Dorsolateral prefrontal cortex (tissue), 120 donors: ENCODE measurements at regions of chr11 and their contacts with region 1.

Region 1: DNA sequence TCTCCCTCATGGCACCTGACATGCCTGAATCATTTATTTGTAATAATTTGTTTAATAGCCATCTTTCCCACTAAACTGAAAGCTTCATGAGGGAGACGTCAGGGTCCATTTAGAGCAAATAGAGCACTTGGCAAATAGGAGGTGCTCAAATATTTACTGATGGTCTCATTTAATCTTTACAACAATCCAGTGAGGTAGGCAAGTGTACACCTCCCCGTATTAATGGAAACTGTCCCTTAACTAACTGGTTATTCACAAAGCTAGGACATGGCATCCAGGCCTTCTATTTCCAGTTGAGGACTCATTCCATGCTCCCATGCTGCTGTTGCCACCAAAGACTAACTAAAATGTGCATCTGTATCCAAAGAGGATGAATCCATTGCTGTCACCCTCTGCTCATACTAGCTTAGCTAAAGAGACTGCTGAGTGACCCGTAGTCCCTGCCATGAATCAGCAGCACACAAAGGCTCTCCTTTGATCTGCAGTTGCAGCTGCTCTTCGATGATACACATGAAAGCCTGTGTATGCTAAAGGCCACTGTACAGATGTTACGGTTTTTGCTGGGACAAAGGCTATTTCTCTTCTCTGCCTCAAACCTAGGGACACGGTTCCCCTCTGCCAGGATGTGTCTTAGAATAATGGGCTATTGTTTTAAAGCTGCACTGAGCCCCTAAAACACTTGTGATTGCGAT is 82.6 kb downstream of the RAB30 start:
- DNase-seq: peak in 8 of 10 donors; percentile 62 to 87 (median 80)
- H3K4me3 ChIP-seq: peak overlapping the region in 34 of 59 donors; percentile 1 to 49 (median 22)
- H3K27ac ChIP-seq: peak overlapping the region in 58 of 59 donors; percentile 32 to 98 (median 90)
- H3K27me3 ChIP-seq: no peaks in the 10 kb centered on the region
- CTCF ChIP-seq: peak in 3 of 56 donors; percentile 9 to 23 (median 14)

Region 2: GRCh38 chr11:82599836-82600235 is 389.2 kb before region 1 on chr11:
- intact Hi-C with region 1: no loop called
- DNase-seq: no peak
- H3K4me3 ChIP-seq: no peak overlapping the region
- H3K27ac ChIP-seq: no peak overlapping the region
- H3K27me3 ChIP-seq: no peaks in the 10 kb centered on the region
- CTCF ChIP-seq: no peak

Region 3: GRCh38 chr11:83007909-83008580 is 19.0 kb after region 1 on chr11:
- intact Hi-C with region 1: loop called in 1 of 2 experiments (anchors 2 kb)
- DNase-seq: peak in 4 of 10 donors; percentile 38 to 58 (median 54)
- H3K4me3 ChIP-seq: peak overlapping the region in 10 of 59 donors; percentile 1 to 23 (median 8)
- H3K27ac ChIP-seq: peak overlapping the region; percentile 38 to 98 (median 90)
- H3K27me3 ChIP-seq: no peaks in the 10 kb centered on the region
- CTCF ChIP-seq: peak in 12 of 56 donors; percentile 7 to 32 (median 20)

Region 4: DNA sequence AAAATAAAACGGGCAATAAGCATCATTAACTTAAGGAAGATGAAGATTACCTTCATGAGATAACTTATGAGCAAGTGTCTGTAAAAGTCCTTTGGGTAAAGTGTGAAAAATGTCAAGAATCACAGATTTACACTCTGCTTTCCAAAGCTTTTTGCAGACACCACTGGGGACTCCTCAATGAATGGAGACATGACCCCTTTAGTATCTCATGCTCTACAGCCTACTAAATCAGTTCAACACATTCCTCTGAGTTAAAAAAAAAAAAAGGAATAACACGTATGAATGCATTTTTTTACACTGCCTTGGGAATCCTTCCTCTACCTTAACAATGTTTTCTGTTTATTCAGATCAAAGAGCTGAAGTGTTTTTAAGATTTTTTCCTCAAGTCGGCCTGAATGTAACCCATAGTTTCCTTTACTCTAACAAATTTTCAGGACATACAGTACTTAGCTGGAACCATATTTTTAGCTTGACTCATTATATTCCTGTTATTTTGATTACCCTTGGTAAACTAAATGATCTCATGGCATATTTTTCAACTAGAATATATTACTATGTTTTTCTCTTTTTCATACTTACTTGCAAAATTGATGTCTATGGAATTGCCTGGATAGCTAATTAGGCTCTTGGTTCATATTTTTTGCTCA is 108.5 kb after region 1 on chr11:
- intact Hi-C with region 1: no loop called
- DNase-seq: no peak
- H3K4me3 ChIP-seq: no peak overlapping the region
- H3K27ac ChIP-seq: no peak overlapping the region
- H3K27me3 ChIP-seq: no peaks in the 10 kb centered on the region
- CTCF ChIP-seq: no peak

Region 5: DNA sequence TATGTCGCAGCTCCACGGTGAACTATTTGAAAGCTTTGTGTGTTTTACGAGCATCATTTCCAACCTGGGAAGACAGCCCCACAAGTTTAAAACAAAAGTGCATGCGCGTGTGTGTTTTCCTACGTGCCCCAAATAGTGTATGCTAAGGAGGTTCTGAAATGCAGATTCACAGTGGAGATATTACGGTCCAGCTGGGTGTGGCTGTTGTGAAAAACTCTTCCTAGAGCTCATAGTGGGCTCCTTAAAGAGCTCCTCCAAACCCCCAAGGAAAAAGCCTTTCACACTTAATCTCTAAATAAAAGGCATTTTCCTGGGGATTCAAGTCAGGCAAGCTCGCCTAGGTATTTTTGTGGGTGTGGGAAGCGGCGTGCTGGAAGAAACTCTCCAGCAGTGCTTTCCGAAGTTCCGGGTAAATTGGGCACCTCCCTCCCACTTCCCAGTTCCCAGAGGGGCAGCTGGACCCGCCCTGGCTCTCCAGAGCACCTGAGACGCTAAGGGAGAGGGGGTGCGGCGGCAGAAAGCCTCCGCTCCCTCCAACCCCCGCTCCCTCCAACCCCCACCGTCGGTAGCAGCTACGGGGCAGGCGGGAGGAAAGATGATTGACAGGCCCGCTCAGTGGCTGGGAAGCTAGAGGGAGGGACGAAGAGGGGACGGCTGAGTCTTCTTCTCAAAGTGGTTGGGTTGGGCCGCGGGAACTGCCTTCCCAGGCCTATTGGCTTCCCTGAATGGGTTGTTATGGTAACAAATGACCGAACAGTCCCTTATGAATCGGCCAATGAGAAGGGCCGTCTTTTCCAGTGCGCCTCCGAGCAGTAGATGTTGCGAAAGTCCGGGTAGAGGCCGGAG is 167.3 kb after region 1 on chr11:
- intact Hi-C with region 1: loop called (anchors 5 kb)
- DNase-seq: peak in 5 of 10 donors; percentile 96 to 100 (median 99)
- H3K4me3 ChIP-seq: peak overlapping the region; percentile 48 to 100 (median 94)
- H3K27ac ChIP-seq: peak overlapping the region; percentile 35 to 100 (median 96)
- H3K27me3 ChIP-seq: no peaks in the 10 kb centered on the region
- CTCF ChIP-seq: peak in 11 of 56 donors; percentile 3 to 26 (median 11)